ENCODE measurements at regions of chr2 and their contacts with region 1.

Region 1: GRCh38 chr2:161651547-161651946 is 27.3 kb downstream of the SLC4A10 start:
- DNase-seq: no peak
- H3K4me3 ChIP-seq: no peak overlapping the region
- H3K27ac ChIP-seq: no peak overlapping the region
- H3K4me1 ChIP-seq: no peaks in the 10 kb centered on the region
- H3K27me3 ChIP-seq: no peaks in the 10 kb centered on the region
- CTCF ChIP-seq: no peak
- POLR2A ChIP-seq: no peak

Region 2: DNA sequence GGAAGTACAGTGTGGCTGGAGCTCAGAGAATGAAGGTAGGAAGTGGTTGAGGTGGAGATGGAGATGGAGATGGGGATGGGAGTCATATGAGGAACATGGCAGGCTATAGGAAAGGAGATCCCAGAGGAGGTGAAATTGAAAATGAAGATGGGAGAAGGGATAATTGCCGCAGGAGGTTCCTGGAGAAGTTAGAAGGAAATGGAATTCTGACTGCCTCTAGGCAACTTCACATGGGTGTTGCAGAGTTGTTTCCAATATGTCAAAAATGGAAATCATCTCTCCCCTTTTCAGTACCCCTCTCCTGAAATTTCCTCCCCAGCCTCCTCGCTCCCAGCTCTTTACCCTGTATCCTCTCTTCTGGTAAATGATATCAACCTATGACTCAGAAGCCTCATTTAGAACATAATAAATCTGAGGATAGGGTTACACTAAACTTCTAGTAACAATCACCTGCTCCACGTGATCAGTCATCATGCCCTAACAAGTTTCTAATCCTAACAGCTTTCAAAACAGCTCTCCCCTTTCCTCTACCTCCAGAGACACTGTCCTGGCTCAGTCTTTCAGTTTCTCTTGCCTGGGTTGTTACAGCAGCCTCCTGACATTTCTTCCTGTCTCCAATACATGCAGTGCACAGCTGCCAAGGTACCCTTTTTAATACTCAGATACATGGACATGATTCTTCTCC is 956.0 kb before region 1 on chr2:
- intact Hi-C with region 1: loop called (anchors 10 kb)
- DNase-seq: no peak
- H3K4me3 ChIP-seq: no peak overlapping the region
- H3K27ac ChIP-seq: no peak overlapping the region
- H3K4me1 ChIP-seq: peaks cover 5% of the 10 kb centered on the region
- H3K27me3 ChIP-seq: no peaks in the 10 kb centered on the region
- CTCF ChIP-seq: no peak
- POLR2A ChIP-seq: no peak

Region 3: DNA sequence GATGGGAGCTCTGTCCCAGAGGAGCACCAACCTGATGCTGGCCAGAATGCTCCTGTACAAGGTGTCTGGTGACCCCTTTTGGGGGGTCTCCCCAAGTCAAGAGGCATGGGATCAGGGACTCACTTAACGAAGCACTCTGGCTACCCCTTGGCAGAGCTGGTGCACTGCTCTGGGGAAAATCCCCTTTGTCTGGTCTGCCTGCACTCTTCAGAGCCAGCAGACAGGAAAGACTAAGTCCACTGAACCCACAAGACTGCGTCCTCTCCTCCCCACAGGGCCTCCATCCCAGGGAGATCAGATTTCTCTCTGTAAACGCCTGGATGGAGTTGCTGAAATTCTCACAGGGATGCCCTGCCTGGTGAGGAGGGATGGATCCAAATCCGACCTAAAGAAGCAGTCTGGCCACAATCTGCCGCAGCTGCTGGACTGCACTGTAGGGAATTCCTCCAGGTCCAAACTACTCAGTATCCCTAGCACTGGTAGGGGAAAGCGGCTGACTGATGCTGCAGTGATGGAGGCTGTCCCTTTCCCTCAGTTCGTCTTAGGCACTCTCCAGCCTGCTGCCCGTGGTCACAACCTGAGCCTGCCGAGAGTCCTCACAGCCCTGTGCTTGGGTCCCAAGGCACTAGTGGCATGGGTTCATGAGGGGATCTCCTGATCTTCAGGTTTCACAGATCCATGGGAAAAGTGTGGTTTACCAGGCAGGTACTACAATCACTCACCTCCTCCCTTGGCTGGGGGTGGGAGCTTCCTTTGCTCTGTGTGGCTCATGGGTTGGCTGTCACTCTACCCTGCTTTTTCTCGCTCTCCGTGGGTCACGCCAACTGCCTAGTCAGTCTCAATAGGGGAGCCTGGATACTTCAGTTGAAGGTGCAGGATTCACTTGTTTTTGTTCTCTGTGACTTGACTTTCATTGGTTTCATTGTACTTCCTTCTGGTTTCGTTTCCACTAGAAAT is 71.3 kb after region 1 on chr2:
- intact Hi-C with region 1: no loop called
- DNase-seq: no peak
- H3K4me3 ChIP-seq: no peak overlapping the region
- H3K27ac ChIP-seq: no peak overlapping the region
- H3K4me1 ChIP-seq: no peaks in the 10 kb centered on the region
- H3K27me3 ChIP-seq: no peaks in the 10 kb centered on the region
- CTCF ChIP-seq: no peak
- POLR2A ChIP-seq: no peak

Region 4: DNA sequence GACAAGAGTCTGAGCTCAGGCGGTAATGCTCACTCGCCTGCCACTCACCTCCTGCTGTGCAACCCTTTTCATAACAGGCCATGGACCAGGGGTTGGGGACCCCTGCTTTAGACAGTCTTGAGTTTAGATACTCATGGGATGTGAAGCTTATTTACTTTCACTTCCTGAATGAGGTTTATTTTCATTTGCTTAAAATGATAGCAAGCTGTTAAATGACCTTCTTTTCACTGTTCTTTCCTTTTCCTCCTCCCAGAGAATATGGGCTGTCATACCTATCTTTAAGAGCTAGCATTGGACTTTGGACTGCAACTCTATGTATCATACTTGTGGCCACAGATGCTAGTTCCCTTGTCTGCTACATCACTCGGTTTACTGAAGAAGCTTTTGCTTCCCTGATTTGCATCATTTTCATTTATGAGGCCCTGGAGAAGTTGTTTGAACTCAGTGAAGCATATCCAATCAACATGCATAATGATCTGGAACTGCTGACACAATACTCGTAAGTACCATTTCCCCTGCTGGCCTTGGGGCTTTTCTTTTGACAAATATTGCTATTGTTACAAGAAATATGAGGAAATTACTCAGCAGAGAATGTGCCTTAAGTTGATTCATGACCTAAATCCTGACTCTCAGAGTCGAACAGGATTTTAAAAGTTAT is 254.0 kb after region 1 on chr2:
- intact Hi-C with region 1: no loop called
- DNase-seq: no peak
- H3K4me3 ChIP-seq: no peak overlapping the region
- H3K27ac ChIP-seq: no peak overlapping the region
- H3K4me1 ChIP-seq: no peaks in the 10 kb centered on the region
- H3K27me3 ChIP-seq: no peaks in the 10 kb centered on the region
- CTCF ChIP-seq: no peak
- POLR2A ChIP-seq: no peak

Measured in vagina (tissue), 2 donors.